ENCODE measurements at regions of chr11 and their contacts with region 1.

Region 1: DNA sequence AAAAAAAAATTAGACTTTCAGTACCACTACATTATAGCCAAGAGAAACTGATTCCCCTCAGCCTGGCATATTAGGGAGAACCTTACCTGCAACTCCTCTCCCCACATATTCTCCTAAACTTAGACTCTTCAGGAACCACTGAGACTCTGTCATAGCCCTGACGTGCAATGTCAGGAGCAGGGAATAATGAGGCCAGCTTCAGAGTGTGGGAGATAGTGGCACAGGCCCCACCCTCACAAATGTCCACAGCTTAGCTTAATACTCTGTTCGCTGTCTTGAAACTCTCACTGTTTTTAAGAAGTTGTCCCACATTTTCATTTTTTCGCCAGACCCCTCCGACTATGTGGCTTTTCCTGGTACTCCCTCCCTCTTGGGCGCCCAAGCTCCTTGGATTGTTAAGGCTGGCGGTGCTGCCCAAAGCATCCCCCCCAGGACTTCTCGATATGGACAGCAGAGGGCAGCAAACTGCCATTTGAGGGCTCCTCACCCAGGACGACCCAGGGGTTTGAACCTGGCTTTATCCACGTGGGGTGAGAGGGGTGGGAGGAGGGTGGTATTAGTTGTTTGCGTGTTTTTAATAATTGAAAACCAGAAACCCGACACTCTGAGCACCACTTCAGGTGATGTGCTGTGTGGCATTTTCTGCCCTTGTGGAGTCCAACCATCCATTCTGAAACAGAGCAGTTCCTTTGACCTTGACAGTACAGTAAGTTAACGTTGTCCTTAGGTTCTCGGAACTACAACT is 45.2 kb upstream of the RASSF10 start:
- DNase-seq: peak; percentile 36
- H3K4me3 Mint-ChIP-seq: no peak overlapping the region
- H3K27ac Mint-ChIP-seq: no peak overlapping the region
- H3K4me1 Mint-ChIP-seq: no peaks in the 10 kb centered on the region
- H3K27me3 Mint-ChIP-seq: peaks cover 10% of the 10 kb centered on the region

Region 2: DNA sequence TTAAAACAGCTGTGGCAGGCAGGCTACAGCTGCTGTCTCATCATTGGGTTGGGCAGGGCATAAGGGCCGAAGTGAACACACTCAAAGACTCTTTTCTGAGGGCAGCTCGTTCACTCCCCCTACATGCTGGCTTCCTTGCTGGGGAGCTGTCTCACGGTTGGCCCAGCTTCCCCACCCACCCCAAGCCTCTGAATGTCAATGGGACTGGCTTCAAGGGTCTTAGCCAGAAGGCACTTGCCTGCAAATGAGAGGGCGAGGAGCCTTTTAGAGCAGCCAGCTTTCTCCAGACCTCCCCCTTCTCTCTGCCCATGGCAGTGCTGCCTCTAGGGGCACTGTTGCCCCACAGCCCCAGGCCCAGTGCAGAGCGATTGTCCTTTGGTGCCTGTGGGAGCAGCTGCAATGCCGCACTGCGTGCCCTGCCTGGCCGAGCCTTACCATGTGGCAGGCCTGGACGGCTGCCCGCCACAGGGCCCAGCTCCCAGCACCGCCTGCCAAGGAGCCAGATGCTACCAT is 49.5 kb before region 1 on chr11:
- intact Hi-C with region 1: no loop called
- DNase-seq: no peak
- H3K4me3 Mint-ChIP-seq: no peak overlapping the region
- H3K27ac Mint-ChIP-seq: no peak overlapping the region
- H3K4me1 Mint-ChIP-seq: no peaks in the 10 kb centered on the region
- H3K27me3 Mint-ChIP-seq: peaks cover 7% of the 10 kb centered on the region

Region 3: GRCh38 chr11:13183094-13183825 is 219.3 kb after region 1 on chr11:
- intact Hi-C with region 1: loop called (anchors 5 kb)
- DNase-seq: no peak
- H3K4me3 Mint-ChIP-seq: no peak overlapping the region
- H3K27ac Mint-ChIP-seq: no peak overlapping the region
- H3K4me1 Mint-ChIP-seq: peaks cover 6% of the 10 kb centered on the region
- H3K27me3 Mint-ChIP-seq: peaks cover 9% of the 10 kb centered on the region

Region 4: DNA sequence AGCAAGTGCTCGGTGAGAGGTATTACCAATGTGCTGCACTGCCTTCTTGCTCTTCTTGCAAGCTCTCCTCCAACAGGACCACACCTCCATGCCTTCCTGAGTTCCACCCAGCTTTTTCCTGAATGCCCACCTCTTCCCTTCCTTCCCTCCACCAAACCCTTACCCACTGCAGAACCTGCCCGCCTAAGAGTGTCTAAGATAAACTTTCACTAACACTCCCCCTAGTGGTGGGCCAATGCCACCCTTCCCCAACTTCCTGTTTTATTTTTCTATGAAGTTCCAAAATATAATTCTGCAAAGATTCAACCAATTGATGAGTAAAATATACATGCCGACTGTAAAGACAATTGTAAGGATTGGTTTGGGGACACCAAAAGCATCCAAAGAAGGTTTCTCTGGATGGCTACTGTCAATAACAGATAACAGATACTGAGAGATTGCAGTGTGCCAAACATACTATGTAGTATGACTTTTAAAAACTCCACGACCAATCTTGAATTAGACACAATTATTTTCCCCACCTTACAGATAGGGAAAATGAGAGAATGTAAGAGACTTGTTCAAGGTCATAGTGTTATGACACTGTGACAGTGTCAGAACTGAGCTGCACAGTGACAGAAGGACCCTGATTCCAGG is 275.0 kb after region 1 on chr11:
- intact Hi-C with region 1: loop called (anchors 1 kb)
- DNase-seq: peak; percentile 14
- H3K4me3 Mint-ChIP-seq: no peak overlapping the region
- H3K27ac Mint-ChIP-seq: no peak overlapping the region
- H3K4me1 Mint-ChIP-seq: peaks cover 2% of the 10 kb centered on the region
- H3K27me3 Mint-ChIP-seq: peaks cover 37% of the 10 kb centered on the region

Region 5: DNA sequence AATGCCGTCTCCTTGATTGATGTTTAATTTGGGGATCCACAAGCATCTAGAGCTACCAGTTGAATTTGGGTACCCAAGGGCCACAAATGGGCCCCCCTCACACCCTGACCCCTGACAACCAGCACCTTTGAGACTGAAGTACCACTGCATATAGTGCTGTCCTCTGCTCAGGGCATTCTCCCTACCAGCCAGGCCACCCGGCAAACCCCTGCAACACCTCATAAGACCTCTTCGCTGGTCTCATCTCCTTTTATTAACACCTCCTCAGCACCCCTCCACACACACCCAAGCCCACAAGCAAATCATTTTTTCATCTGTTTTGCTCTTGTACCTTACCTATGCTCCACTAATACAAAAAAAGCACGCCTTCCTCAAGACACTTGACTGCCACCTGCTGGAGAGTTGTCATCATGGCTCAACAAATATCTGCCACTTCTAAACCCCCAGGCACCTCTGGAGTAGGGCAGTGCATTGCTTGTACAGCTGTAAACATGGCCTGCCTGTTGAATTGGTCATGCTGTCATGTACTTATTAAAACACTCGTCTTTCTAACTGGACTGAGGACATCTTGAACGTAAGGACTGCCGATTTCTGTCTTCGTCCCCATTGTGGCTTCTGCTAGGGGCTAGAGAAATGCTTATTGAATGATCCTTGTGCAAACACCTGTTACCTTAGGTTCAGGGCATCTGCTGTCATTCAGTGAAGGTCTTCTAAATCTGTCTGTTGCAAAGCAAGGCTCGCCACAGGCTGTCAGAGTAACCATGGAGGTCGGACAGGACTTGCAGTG is 380.2 kb after region 1 on chr11:
- intact Hi-C with region 1: loop called (anchors 2 kb)
- DNase-seq: peak; percentile 60
- H3K4me3 Mint-ChIP-seq: no peak overlapping the region
- H3K27ac Mint-ChIP-seq: no peak overlapping the region
- H3K4me1 Mint-ChIP-seq: peaks cover 17% of the 10 kb centered on the region
- H3K27me3 Mint-ChIP-seq: no peaks in the 10 kb centered on the region

Region 6: GRCh38 chr11:13462901-13463778 is 499.2 kb after region 1 on chr11 and contains the start of gene BTBD10:
- intact Hi-C with region 1: loop called (anchors 10 kb)
- DNase-seq: peak; percentile 91
- H3K4me3 Mint-ChIP-seq: peak within 1 kb of the TSS; percentile 98
- H3K27ac Mint-ChIP-seq: peak within 1 kb of the TSS; percentile 93
- H3K4me1 Mint-ChIP-seq: peaks cover 30% of the 10 kb centered on the region
- H3K27me3 Mint-ChIP-seq: no peaks in the 10 kb centered on the region
- total RNA-seq, gene BTBD10: 22.6 and 24.9 TPM in 2 replicates